A549 (cell line): ENCODE measurements at regions of chr6 and their contacts with region 1.

Region 1: DNA sequence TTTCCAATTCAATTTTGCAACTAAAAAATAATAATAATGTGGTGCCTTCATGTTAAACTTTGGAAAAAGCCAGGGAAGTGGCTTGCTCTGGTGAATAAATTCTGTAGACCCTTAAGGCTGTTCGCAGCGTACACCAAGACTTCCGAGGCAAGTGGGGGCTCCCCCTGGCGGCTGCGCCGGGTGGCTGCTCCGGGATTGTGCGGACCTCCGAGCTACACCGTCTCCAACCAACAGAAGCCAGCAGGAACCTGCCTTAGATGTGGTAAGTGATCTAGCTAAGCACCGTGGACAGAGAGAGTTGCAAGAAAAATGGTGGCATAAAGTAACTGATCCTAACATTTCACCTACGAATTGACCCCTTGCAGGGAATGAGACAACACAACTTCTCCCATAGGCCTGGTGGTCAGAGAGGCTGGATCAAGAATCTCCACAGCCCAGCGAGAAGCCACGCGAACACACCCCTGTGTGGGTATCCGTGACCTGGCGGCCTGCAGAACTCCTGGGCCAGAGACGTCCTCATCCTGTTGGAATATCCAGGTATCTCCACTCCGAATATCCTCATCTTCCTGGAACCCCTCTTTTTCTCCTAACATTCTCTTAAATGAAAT is 69.6 kb downstream of the TBXT start:
- DNase-seq: peak; percentile 61 to 87
- ATAC-seq: peak; percentile 99 to 100
- H3K4me3 ChIP-seq: peak overlapping the region; percentile 56
- H3K27ac ChIP-seq: peak overlapping the region; percentile 92 to 94
- H3K4me1 ChIP-seq: peaks cover 10% of the 10 kb centered on the region; the same call in 2 of the 3 replicates
- CTCF ChIP-seq: peak; percentile 81
- EP300 ChIP-seq: no peak
- POLR2A ChIP-seq: no peak
- RAD21 ChIP-seq: peak; percentile 74 to 83

Region 2: DNA sequence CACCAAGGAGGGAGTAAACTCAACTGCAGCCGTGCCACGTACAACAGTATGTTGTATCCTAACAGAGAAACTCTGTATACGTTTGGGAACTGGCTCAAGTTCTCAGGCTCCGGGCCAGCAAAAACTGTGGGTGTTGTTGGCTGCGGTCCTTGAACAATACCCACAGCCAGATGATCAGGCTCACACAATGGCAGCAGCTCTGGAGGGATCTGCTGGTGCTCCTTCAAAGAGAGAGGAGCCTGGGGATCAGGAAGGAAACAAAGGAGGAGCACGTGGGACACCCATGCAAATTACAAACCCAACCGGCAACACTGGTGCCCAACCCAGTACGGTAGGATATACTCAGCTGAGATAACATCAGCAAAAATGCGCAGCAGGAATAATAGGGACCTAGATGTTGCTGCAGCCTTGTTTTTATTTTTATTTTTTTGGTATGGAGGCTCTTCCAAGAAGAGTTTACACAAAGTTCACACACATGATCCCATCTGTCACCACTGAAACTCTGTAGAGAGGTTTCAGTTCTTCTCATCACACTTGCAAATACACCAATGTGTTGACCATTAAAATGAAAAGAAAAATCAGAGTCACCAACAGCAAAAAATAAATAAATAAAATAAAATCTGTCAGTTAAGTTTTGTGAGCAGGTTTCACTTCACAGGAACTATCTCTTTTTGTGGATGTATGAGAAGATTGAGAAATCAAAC is 393.8 kb before region 1 on chr6:
- CTCF ChIA-PET with region 1: no interaction called
- POLR2A ChIA-PET with region 1: no interaction called
- DNase-seq: no peak
- ATAC-seq: no peak
- H3K4me3 ChIP-seq: no peak overlapping the region
- H3K27ac ChIP-seq: no peak overlapping the region
- H3K4me1 ChIP-seq: no peaks in the 10 kb centered on the region
- CTCF ChIP-seq: no peak
- EP300 ChIP-seq: no peak
- POLR2A ChIP-seq: no peak
- RAD21 ChIP-seq: no peak

Region 3: GRCh38 chr6:165884813-165885765 is 212.9 kb before region 1 on chr6:
- CTCF ChIA-PET with region 1: interaction called, 56 read pairs
- POLR2A ChIA-PET with region 1: no interaction called
- DNase-seq: peak; percentile 52 to 69
- ATAC-seq: peak; percentile 87
- H3K4me3 ChIP-seq: no peak overlapping the region
- H3K27ac ChIP-seq: peak overlapping the region; percentile 5 to 49; a peak in 2 of 6 replicates
- H3K4me1 ChIP-seq: peaks cover 12% of the 10 kb centered on the region; the same call in 2 of the 3 replicates
- CTCF ChIP-seq: peak; percentile 64
- EP300 ChIP-seq: no peak
- POLR2A ChIP-seq: no peak
- RAD21 ChIP-seq: peak; percentile 80

Region 4: DNA sequence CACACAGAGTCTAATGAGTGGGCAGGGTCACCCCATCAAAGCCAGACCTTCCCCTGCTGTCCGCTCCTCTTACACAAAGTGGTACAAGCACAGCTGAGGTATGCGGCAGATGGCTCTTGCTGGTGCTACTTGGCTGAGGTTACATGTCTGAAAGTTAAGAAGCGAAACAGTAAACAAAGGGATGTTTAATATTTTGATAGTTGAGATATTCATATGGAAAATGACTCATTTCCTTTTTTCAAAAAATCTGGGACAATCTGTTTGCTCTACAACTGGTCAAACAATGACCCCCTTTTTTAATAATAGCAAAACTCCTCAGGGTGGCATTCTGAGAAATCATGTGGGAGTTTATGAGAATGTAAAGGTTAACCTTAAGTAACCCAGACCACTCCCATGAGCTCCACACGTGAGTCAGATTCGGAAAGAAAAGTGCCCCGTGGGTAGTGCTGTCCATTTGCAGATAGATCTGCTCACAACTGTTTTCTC is 175.7 kb before region 1 on chr6:
- CTCF ChIA-PET with region 1: interaction called, 13 read pairs
- POLR2A ChIA-PET with region 1: no interaction called
- DNase-seq: peak; percentile 49 to 70
- ATAC-seq: peak; percentile 66 to 82
- H3K4me3 ChIP-seq: 0 out of 3 replicates have a peak overlapping the region, but pooled peaks have one; percentile 14
- H3K27ac ChIP-seq: peak overlapping the region; percentile 55 to 79; a peak in 5 of 6 replicates
- H3K4me1 ChIP-seq: peaks cover 55% of the 10 kb centered on the region
- CTCF ChIP-seq: no peak
- EP300 ChIP-seq: peak; percentile 58 to 60; a peak in 3 of 5 replicates
- POLR2A ChIP-seq: no peak
- RAD21 ChIP-seq: no peak

Region 5: DNA sequence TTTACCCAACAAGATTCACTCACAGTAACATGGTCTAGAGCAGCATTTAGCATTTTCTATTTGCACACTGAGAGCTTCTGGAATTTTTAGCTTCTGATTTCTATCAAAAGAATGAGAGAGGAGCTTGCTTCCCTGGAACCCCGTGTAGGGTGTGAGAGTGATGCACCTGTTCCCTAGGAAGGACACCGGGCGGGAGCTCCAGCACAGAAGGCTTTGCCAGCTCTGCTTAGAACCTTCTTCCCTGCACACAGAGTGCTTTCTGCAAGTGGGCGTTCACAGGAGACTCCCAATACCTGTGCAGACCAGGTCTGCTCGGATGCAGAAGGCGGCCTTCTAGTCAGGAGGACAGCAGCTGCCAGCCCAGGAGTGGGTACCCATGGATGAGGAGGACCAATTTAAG is 147.7 kb before region 1 on chr6:
- CTCF ChIA-PET with region 1: interaction called, 12 read pairs
- POLR2A ChIA-PET with region 1: no interaction called
- DNase-seq: no peak
- ATAC-seq: peak; percentile 22 to 25; a peak in 3 of 6 replicates
- H3K4me3 ChIP-seq: no peak overlapping the region
- H3K27ac ChIP-seq: 0 out of 6 replicates have a peak overlapping the region, but pooled peaks of 1 of the 2 experiments have one; percentile 20
- H3K4me1 ChIP-seq: peaks cover 47% of the 10 kb centered on the region
- CTCF ChIP-seq: no peak
- EP300 ChIP-seq: no peak
- POLR2A ChIP-seq: no peak
- RAD21 ChIP-seq: no peak

Region 6: GRCh38 chr6:165987483-165988301 is 110.3 kb before region 1 on chr6:
- CTCF ChIA-PET with region 1: interaction called, 23 read pairs
- POLR2A ChIA-PET with region 1: interaction called, 12 read pairs
- DNase-seq: peak; percentile 89 to 99
- ATAC-seq: peak; percentile 80 to 85
- H3K4me3 ChIP-seq: peak overlapping the region; percentile 89
- H3K27ac ChIP-seq: peak overlapping the region; percentile 95 to 97
- H3K4me1 ChIP-seq: peaks cover 8% of the 10 kb centered on the region
- CTCF ChIP-seq: no peak
- EP300 ChIP-seq: peak; percentile 98 to 100
- POLR2A ChIP-seq: peak; percentile 61
- RAD21 ChIP-seq: peak; percentile 20 to 60; a peak in 4 of 5 replicates

Region 7: GRCh38 chr6:166005944-166006899 is 91.8 kb before region 1 on chr6:
- CTCF ChIA-PET with region 1: interaction called, 52 read pairs
- POLR2A ChIA-PET with region 1: interaction called, 8 read pairs
- DNase-seq: peak; percentile 67 to 93
- ATAC-seq: peak; percentile 33 to 43
- H3K4me3 ChIP-seq: peak overlapping the region; percentile 29
- H3K27ac ChIP-seq: peak overlapping the region; percentile 99
- H3K4me1 ChIP-seq: peaks cover 49% of the 10 kb centered on the region
- CTCF ChIP-seq: no peak
- EP300 ChIP-seq: peak; percentile 98 to 99
- POLR2A ChIP-seq: no peak
- RAD21 ChIP-seq: peak; percentile 15 to 45; a peak in 4 of 5 replicates

Region 8: DNA sequence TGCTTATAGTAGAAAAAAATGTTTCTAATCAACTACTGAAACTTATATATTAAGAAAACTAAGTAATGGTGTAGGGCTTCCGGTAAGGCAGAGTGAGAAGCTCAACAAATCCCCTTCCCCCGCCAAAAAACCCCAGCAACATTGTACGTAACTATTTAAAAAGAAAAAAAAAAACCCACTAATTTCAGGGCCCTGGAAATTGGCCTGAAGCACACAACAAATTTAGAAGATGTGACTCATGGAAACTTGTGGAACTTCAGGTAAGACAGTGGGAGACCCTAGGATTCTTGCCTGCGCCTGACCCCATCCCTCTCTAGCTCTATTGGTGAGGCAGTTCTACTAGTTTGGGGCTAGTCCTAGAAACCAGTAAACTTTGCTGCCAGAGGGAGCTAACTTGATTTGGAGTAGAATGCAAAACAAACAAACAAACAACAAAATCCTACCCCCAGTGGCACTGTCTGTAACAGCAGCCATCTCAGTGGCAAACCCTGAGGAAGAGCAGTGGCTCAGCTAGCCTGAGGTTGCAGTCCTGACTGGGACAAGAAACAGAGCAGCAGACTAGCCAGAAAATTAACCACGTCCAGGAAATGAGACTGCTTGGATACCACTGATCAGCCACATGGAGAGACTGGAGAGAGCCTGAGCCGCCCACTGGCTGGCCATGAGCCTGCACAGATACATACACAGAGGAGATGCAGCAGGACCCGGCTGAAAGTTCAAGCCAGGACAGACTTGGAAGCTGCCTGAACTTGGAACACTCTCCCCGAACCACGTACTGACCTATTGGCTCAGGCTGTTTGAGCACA is 65.5 kb before region 1 on chr6:
- CTCF ChIA-PET with region 1: interaction called, 17 read pairs
- POLR2A ChIA-PET with region 1: no interaction called
- DNase-seq: peak; percentile 33 to 89
- ATAC-seq: peak; percentile 95
- H3K4me3 ChIP-seq: 0 out of 3 replicates have a peak overlapping the region, but pooled peaks have one; percentile 4
- H3K27ac ChIP-seq: peak overlapping the region; percentile 79 to 83
- H3K4me1 ChIP-seq: peaks cover 38% of the 10 kb centered on the region
- CTCF ChIP-seq: no peak
- EP300 ChIP-seq: no peak
- POLR2A ChIP-seq: no peak
- RAD21 ChIP-seq: 0 out of 5 replicates have a peak, but pooled peaks of 1 of the 2 experiments have one; percentile 9